ENCODE measurements at regions of chr11 and their contacts with region 1.

Region 1: DNA sequence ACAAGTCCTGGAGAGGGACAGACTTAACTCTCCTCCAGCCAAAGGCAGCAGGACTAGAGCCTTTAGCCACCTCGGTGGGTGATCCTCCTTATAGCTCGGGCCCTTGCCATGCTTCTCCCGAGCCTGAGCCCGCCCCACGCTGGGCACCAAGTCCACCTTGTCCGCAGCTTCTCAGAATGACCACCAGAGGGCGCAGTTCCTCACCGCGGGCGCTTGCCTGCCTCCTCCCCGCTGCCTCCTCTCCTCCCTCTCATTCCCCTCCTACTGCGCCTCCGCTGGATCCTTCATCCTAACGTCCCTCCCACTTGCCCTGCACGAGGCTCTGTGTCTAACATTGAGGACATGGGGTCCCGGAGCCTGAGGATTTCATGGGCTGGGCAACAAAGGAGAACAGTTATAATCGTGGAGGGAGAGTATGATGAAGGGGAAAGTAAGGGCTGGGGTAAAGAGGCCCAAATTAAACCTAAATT is 11.3 kb upstream of the MOGAT2 start:
- DNase-seq: peak; percentile 76
- H3K4me3 Mint-ChIP-seq: no peak overlapping the region
- H3K27ac Mint-ChIP-seq: no peak overlapping the region
- H3K4me1 Mint-ChIP-seq: no peaks in the 10 kb centered on the region
- H3K27me3 Mint-ChIP-seq: peaks cover 3% of the 10 kb centered on the region

Region 2: DNA sequence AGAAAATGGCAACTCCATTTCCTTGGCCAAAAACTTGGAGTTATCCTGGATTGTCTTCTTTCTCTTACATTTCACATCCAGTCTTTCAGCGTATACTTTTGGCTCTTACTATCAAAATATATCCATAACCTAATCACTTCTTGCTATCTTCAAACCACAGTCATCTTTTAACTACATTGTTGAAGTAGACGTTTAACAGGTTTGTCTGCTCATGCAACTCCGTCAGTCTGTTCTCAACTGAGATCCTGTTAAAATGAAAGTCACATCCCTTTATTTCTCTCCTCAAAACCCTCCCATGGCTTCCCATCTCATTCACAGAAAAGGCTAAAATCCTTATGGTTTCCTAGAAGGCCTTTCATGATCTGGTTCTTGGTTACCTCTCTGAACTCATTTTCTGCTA is 150.6 kb after region 1 on chr11:
- CTCF ChIA-PET with region 1: no interaction called
- POLR2A ChIA-PET with region 1: no interaction called
- intact Hi-C with region 1: no loop called
- DNase-seq: no peak
- H3K4me3 Mint-ChIP-seq: no peak overlapping the region
- H3K27ac Mint-ChIP-seq: no peak overlapping the region
- H3K4me1 Mint-ChIP-seq: peaks cover 2% of the 10 kb centered on the region
- H3K27me3 Mint-ChIP-seq: no peaks in the 10 kb centered on the region

Region 3: GRCh38 chr11:75867775-75868374 is 161.6 kb after region 1 on chr11:
- CTCF ChIA-PET with region 1: interaction called, 25 read pairs
- POLR2A ChIA-PET with region 1: no interaction called
- intact Hi-C with region 1: no loop called
- DNase-seq: peak; percentile 22
- H3K4me3 Mint-ChIP-seq: no peak overlapping the region
- H3K27ac Mint-ChIP-seq: no peak overlapping the region
- H3K4me1 Mint-ChIP-seq: peaks cover 4% of the 10 kb centered on the region
- H3K27me3 Mint-ChIP-seq: no peaks in the 10 kb centered on the region

Region 4: DNA sequence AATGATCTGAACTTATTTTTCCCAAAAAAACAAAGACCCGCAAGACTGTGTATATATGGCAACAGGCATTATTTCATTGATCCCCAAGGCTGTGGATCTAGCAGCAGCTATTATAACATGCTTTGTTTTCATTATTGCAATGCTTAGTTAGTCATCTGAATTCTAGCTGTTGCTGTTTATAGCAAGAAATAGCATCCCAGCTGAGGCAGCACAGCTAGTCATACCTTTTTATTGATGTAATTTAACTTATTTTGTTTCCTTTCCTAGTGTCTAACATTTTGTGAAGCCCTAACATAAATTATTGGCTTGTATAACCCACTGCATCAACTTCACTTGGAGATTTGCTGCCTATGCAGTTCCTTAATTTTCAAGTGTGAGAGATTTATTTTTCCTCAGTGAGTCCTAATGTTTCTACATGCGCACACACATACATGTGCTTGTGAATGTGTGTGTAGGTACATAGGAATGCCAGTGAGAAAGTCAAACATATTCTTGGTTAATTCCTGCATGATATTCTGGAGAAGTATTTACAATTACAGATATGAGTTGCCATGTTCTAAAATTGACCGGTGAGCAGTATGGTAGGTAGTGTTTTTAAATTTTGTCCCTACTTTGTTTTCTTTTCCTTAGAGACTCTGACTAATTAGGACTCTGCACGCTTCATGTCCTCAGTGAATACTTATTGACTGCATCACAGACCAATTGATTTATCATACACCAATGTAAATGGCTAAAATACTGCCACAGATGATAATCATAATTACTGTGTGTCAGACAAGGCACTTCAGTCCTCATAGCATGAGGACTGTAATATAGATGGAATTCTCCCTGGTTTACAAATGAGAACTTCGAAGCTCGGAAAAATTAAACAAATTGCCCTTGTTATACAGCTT is 380.7 kb after region 1 on chr11:
- CTCF ChIA-PET with region 1: no interaction called
- POLR2A ChIA-PET with region 1: no interaction called
- intact Hi-C with region 1: no loop called
- DNase-seq: no peak
- H3K4me3 Mint-ChIP-seq: no peak overlapping the region
- H3K27ac Mint-ChIP-seq: no peak overlapping the region
- H3K4me1 Mint-ChIP-seq: no peaks in the 10 kb centered on the region
- H3K27me3 Mint-ChIP-seq: no peaks in the 10 kb centered on the region

Measured in activated CD4-positive, alpha-beta memory T cell treated with anti-CD3 and anti-CD28 coated beads for 36 hours (primary cell).